ENCODE measurements at regions of chr15 and their contacts with region 1.

Region 1: DNA sequence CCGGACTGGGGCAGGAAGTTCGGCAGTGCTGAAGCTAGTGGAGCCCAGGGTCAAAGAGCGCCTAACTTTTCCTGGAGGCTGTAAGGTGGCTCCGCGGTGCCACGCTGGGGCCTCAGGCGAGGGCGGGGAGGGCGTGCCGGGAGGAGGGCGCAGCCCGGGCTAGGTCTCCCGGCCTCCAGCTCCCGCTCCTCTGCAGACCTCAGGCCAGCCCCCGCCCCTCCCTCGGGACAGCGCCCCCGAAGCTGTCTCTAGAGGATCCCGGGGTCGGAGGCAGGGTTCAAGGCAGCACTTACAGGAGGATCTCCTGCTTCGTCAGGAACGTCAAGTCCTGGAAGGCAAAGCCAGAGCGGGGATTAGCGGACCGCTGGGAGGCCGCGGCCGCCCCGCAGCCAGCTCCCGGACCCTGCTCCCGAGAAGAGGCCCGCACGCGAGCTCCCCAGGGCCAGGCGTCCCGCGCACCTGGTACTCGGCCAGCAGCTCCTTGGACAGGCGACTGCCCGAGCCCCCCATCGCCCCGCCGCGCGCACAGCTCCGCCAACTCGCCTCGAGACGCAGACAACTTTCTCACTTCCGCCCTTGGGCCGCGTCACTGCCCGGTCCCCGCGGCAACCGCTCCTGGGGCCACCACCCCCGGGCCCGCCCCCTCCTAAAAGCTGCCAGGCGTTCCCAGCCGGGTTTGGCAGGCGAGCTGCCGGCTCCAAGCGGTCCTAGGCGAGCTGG is at the start of gene CIB1:
- DNase-seq: peak; percentile 99
- H3K4me3 Mint-ChIP-seq: peak within 1 kb of the TSS; percentile 99
- H3K27ac Mint-ChIP-seq: peak within 1 kb of the TSS; percentile 95
- H3K4me1 Mint-ChIP-seq: peaks cover 43% of the 10 kb centered on the region
- H3K27me3 Mint-ChIP-seq: no peaks in the 10 kb centered on the region
- total RNA-seq, gene CIB1: 149 and 156 TPM in 2 replicates

Region 2: DNA sequence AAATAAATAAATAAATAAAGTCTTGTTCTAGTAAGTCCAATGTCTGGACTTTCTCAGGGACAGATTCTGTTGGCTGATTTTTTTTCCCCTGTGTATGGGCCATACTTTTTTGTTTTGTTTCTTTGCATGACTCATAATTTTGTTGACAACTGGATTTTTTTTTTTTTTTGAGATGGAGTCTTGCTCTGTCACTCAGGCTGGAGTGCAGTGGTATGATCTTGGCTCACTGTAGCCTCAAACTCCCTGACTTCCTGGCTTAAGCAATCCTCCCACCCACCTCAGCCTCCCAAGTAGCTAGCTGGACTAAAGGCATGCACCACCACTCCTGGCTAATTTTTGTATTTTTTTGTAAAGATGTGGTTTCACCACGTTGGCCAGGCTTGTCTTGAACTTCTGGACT is 619.4 kb before region 1 on chr15:
- intact Hi-C with region 1: no loop called
- DNase-seq: peak; percentile 21
- H3K4me3 Mint-ChIP-seq: no peak overlapping the region
- H3K27ac Mint-ChIP-seq: no peak overlapping the region
- H3K4me1 Mint-ChIP-seq: peaks cover 2% of the 10 kb centered on the region
- H3K27me3 Mint-ChIP-seq: no peaks in the 10 kb centered on the region

Region 3: DNA sequence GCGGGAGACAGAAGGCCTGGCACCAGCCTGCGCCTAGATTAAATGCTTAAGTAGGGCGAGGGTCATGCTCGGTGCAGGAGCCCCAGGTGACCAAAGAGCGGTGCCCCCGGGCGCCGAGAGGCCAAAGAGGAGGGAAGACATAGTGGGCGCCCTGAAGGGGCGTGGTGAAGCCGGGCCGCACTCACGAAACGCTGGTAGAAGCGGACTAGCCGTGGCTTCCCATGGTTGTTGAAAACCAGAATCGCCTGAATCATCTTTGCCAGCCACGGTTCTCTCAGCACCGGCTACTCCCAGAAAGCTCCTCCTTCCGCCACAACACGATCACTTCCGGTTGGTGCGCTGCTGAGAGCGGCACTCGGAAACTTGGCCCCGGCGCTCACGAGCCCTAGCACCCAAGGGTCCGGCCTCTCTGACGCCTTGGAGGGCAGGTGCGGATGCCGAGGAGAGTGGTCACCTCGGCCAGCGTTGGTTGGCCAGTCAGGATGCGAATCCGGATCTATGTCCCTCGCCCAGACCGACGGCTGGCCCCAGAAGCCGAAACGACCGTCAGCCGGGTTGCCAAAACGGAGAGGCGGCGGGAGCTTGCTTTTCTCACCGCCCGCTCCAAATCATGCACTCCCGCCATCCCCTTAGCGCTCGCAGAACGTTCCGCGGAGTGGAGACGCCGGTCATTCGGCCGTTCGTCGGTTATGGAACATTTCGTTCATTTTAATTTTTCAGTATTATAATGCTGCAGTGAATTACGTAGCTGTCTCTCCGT is 339.7 kb before region 1 on chr15 and contains the start of gene AP3S2:
- intact Hi-C with region 1: loop called (anchors 10 kb)
- DNase-seq: peak; percentile 97
- H3K4me3 Mint-ChIP-seq: peak within 1 kb of the TSS; percentile 97
- H3K27ac Mint-ChIP-seq: peak within 1 kb of the TSS; percentile 97
- H3K4me1 Mint-ChIP-seq: peaks cover 27% of the 10 kb centered on the region
- H3K27me3 Mint-ChIP-seq: no peaks in the 10 kb centered on the region
- total RNA-seq, gene AP3S2: 20.3 and 20.6 TPM in 2 replicates

Region 4: GRCh38 chr15:89947385-89947784 is 286.2 kb before region 1 on chr15:
- intact Hi-C with region 1: no loop called
- DNase-seq: no peak
- H3K4me3 Mint-ChIP-seq: no peak overlapping the region
- H3K27ac Mint-ChIP-seq: no peak overlapping the region
- H3K4me1 Mint-ChIP-seq: peaks cover 3% of the 10 kb centered on the region
- H3K27me3 Mint-ChIP-seq: peaks cover 5% of the 10 kb centered on the region

Region 5: GRCh38 chr15:90143166-90143655 is 90.3 kb before region 1 on chr15:
- intact Hi-C with region 1: loop called (anchors 5 kb)
- DNase-seq: peak; percentile 92
- H3K4me3 Mint-ChIP-seq: peak overlapping the region; percentile 66
- H3K27ac Mint-ChIP-seq: peak overlapping the region; percentile 81
- H3K4me1 Mint-ChIP-seq: peaks cover 29% of the 10 kb centered on the region
- H3K27me3 Mint-ChIP-seq: no peaks in the 10 kb centered on the region

Region 6: GRCh38 chr15:90214553-90215196 is 18.9 kb before region 1 on chr15:
- intact Hi-C with region 1: no loop called
- DNase-seq: no peak
- H3K4me3 Mint-ChIP-seq: no peak overlapping the region
- H3K27ac Mint-ChIP-seq: no peak overlapping the region
- H3K4me1 Mint-ChIP-seq: peaks cover 27% of the 10 kb centered on the region
- H3K27me3 Mint-ChIP-seq: no peaks in the 10 kb centered on the region

Region 7: DNA sequence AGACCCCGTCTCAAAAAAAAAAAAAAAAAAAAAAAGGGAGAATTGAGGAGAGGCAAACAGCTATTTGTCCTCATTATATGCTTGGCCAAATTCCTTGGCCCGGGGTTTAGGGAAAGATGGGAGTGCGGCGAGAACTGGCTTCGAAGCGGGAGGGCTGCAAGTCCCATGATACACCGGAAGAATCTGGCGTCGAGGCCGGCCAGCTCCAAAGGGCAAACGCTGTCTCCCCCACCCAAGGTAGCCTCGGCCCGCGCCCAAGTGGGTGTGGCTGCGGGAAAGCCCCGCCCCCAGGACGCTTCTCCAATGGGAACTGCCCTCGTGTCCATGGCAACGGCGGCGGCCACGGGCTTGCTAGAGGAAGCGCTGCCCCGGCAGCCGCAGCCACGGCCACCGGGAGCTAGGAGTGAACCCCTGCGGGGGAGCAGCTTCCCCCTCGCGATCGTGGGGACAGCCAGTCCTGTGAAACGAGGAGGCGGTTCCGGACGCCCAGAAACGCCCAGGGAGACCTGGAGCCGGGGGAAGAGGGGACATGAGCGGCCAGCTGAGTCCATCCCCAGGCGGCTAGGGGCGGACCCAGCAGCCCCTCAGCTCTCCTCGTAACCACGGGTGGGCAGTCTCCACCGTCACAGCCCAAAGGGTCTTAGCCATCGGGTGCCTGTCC is 15.8 kb after region 1 on chr15 and contains the start of gene TTLL13:
- intact Hi-C with region 1: loop called (anchors 1 kb)
- DNase-seq: peak; percentile 96
- H3K4me3 Mint-ChIP-seq: peak within 1 kb of the TSS; percentile 80
- H3K27ac Mint-ChIP-seq: no peak within 1 kb of the TSS
- H3K4me1 Mint-ChIP-seq: peaks cover 8% of the 10 kb centered on the region
- H3K27me3 Mint-ChIP-seq: no peaks in the 10 kb centered on the region
- total RNA-seq, gene TTLL13: 0.44 and 1.4 TPM in 2 replicates

Region 8: GRCh38 chr15:90387537-90388461 is 154.3 kb after region 1 on chr15 and contains the start of gene IQGAP1:
- intact Hi-C with region 1: loop called (anchors 10 kb)
- DNase-seq: peak; percentile 99
- H3K4me3 Mint-ChIP-seq: peak within 1 kb of the TSS; percentile 88
- H3K27ac Mint-ChIP-seq: peak within 1 kb of the TSS; percentile 99
- H3K4me1 Mint-ChIP-seq: peaks cover 42% of the 10 kb centered on the region
- H3K27me3 Mint-ChIP-seq: no peaks in the 10 kb centered on the region
- total RNA-seq, gene IQGAP1: 154 and 160 TPM in 2 replicates